HCT116 (cell line): ENCODE measurements at regions of chr2 and their contacts with region 1.

Region 1: DNA sequence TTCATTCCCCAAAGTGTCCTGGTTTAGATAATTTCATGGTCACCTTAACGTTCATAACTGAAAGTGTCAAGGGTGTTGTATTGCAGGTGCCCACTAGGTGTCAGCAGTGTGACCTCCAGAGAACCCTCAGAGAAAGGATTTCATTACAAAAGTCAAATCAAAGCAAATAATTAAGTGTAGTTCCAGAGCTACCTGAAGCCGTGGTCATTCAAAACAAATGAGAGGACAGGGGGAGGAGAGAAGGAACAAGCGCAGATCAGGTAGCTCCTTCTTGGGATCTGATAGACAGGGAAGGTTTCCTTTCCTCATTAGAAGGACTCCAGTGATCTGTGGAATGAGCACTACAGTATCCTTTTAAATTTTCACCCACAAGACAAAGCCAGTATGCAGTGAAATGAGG is at the start of gene SLC9A4:
- DNase-seq: peak; percentile 48
- ATAC-seq: peak; percentile 89
- H3K4me3 ChIP-seq: no peak within 1 kb of the TSS
- H3K27ac ChIP-seq: no peak within 1 kb of the TSS
- H3K4me1 ChIP-seq: peaks cover 0 to 2% of the 10 kb centered on the region in 2 experiments; a peak in 1 of 4 replicates
- H3K27me3 ChIP-seq: no peaks in the 10 kb centered on the region
- CTCF ChIP-seq: peak; percentile 69 to 92 (median 88); a peak in 5 of 6 replicates
- POLR2A ChIP-seq: no peak
- RAD21 ChIP-seq: peak; percentile 74
- total RNA-seq, gene SLC9A4: 0.07 TPM

Region 2: DNA sequence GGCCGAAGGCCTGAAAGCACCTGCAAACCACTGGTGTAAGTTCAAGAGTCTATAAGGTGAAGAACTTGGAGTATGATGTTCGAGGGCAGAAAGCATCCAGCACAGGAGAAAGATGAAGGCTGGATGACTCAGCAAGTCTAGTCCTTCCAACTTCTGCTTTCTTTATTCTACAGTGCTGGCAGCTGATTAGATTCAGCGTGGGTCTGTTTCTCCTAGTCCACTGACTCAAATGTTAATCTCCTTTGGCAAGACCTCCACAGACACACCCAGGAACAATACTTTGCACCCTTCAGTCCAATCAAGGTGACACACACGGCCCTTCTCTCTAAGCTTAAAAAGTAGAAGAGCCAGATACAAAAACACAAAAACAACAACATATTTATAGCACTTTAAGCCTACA is 1959.4 kb before region 1 on chr2:
- CTCF ChIA-PET with region 1: no interaction called
- POLR2A ChIA-PET with region 1: no interaction called
- RAD21 ChIA-PET with region 1: no interaction called
- intact Hi-C with region 1: no loop called
- DNase-seq: no peak
- ATAC-seq: no peak
- H3K4me3 ChIP-seq: no peak overlapping the region
- H3K27ac ChIP-seq: no peak overlapping the region
- H3K4me1 ChIP-seq: no peaks in the 10 kb centered on the region
- H3K27me3 ChIP-seq: no peaks in the 10 kb centered on the region
- CTCF ChIP-seq: no peak
- POLR2A ChIP-seq: no peak
- RAD21 ChIP-seq: no peak

Region 3: GRCh38 chr2:102487761-102488466 is 14.9 kb after region 1 on chr2:
- CTCF ChIA-PET with region 1: interaction called, 14 read pairs
- POLR2A ChIA-PET with region 1: no interaction called
- RAD21 ChIA-PET with region 1: no interaction called
- intact Hi-C with region 1: no loop called
- DNase-seq: no peak
- ATAC-seq: no peak
- H3K4me3 ChIP-seq: no peak overlapping the region
- H3K27ac ChIP-seq: no peak overlapping the region
- H3K4me1 ChIP-seq: no peaks in the 10 kb centered on the region; a peak in 1 of 4 replicates
- H3K27me3 ChIP-seq: peaks cover 8% of the 10 kb centered on the region; the same call in 1 of the 2 replicates
- CTCF ChIP-seq: no peak
- POLR2A ChIP-seq: no peak
- RAD21 ChIP-seq: no peak

Region 4: DNA sequence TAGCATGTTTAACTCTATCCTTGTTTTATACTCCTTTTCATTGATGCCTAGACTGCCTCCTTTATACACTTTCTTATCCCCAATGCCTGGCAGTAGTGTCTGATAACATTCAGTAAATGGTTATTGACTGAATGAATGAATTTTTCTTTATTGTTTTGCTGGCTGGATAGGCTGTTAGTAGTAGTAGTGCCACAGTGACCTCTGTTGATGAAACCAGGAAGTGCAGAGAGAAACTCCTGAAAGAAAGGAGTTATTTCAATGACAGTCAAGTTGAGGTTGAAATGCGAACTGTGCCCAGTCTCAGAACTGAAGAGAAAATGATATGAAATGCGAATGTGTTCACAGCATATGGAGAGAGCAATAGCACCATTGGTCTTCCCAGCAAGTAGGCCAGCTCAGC is 119.6 kb after region 1 on chr2:
- CTCF ChIA-PET with region 1: interaction called, 11 read pairs
- POLR2A ChIA-PET with region 1: no interaction called
- RAD21 ChIA-PET with region 1: no interaction called
- intact Hi-C with region 1: loop called (anchors 1 kb)
- DNase-seq: no peak
- ATAC-seq: 0 out of 2 replicates have a peak, but pooled peaks have one; percentile 20
- H3K4me3 ChIP-seq: no peak overlapping the region
- H3K27ac ChIP-seq: no peak overlapping the region
- H3K4me1 ChIP-seq: no peaks in the 10 kb centered on the region
- H3K27me3 ChIP-seq: no peaks in the 10 kb centered on the region
- CTCF ChIP-seq: peak; percentile 31 to 70 (median 63); a peak in 4 of 6 replicates
- POLR2A ChIP-seq: no peak
- RAD21 ChIP-seq: peak; percentile 56

Region 5: GRCh38 chr2:102615622-102616436 is 142.8 kb after region 1 on chr2:
- CTCF ChIA-PET with region 1: interaction called, 36 read pairs
- POLR2A ChIA-PET with region 1: no interaction called
- RAD21 ChIA-PET with region 1: interaction called in 1 of 2 experiments, 6 read pairs
- intact Hi-C with region 1: loop called (anchors 1 kb)
- DNase-seq: peak; percentile 35
- ATAC-seq: peak; percentile 78
- H3K4me3 ChIP-seq: no peak overlapping the region
- H3K27ac ChIP-seq: no peak overlapping the region
- H3K4me1 ChIP-seq: peaks cover 8 to 15% of the 10 kb centered on the region in 2 experiments; a peak in 2 of 4 replicates
- H3K27me3 ChIP-seq: no peaks in the 10 kb centered on the region
- CTCF ChIP-seq: peak; percentile 81 to 97 (median 92)
- POLR2A ChIP-seq: no peak
- RAD21 ChIP-seq: peak; percentile 75

Region 6: DNA sequence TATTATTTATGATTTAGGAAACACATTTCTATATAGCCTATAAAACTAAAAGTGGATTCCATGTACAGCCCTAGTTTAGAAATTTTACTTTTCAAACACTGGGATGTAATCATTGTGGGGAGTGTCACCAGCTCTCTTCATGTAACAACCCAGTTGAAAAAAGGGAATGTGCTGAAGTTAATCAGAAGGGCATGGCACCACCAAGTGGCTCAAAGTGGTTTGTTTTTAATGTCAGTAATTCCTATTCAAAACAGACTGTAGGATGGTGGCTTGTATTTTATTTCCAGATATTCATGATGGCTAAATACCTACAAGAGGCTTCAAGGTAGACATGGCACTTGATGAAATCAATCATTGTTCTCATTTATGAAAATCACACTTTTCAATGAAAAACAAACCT is 230.7 kb after region 1 on chr2:
- CTCF ChIA-PET with region 1: interaction called, 16 read pairs
- POLR2A ChIA-PET with region 1: no interaction called
- RAD21 ChIA-PET with region 1: no interaction called
- intact Hi-C with region 1: loop called (anchors 1 kb)
- DNase-seq: peak; percentile 23
- ATAC-seq: peak; percentile 89
- H3K4me3 ChIP-seq: no peak overlapping the region
- H3K27ac ChIP-seq: no peak overlapping the region
- H3K4me1 ChIP-seq: peaks cover 5 to 7% of the 10 kb centered on the region in 2 experiments
- H3K27me3 ChIP-seq: no peaks in the 10 kb centered on the region
- CTCF ChIP-seq: peak; percentile 31 to 57 (median 49); a peak in 4 of 6 replicates
- POLR2A ChIP-seq: no peak
- RAD21 ChIP-seq: peak; percentile 76

Region 7: DNA sequence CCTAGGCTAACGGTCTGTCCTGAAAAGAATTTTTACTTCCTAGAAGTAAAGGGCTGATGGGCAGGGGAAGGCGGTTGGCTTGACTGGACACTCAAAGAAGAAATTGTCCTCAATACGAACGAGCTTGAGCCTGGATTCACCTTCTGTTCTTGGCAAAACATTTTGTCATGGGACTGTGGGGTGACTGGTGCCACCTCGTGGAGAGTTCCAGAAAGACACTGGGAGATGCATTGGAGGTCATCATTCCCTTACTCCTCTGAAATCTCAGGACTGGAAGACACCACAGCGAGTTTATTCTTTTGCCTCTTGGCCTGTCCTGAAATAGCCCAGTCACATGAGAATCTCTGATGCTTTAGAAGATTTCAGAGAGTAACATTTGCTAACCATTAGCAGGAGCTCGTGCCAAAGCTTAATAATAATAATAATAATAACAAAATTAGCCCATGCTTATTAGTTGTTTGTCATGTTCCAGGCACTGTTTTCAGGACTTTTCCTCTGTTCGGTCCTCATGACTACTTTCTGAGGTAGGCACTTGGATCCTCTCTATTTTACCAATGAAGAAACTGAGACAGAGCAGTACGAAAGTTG is 333.3 kb after region 1 on chr2:
- CTCF ChIA-PET with region 1: interaction called, 9 read pairs
- POLR2A ChIA-PET with region 1: no interaction called
- RAD21 ChIA-PET with region 1: no interaction called
- intact Hi-C with region 1: loop called (anchors 5 kb)
- DNase-seq: peak; percentile 37
- ATAC-seq: peak; percentile 86
- H3K4me3 ChIP-seq: no peak overlapping the region
- H3K27ac ChIP-seq: no peak overlapping the region
- H3K4me1 ChIP-seq: no peaks in the 10 kb centered on the region
- H3K27me3 ChIP-seq: no peaks in the 10 kb centered on the region
- CTCF ChIP-seq: peak; percentile 55 to 87 (median 82); a peak in 5 of 6 replicates
- POLR2A ChIP-seq: no peak
- RAD21 ChIP-seq: peak; percentile 61